Breast epithelium (tissue), 4 donors: ENCODE measurements at regions of chr2 and their contacts with region 1.

Region 1: GRCh38 chr2:43226558-43226954 is at the start of gene ZFP36L2:
- DNase-seq: peak; percentile 95
- H3K4me3 ChIP-seq: peak within 1 kb of the TSS; percentile 69 to 96 (median 91)
- H3K27ac ChIP-seq: peak within 1 kb of the TSS; percentile 99
- H3K4me1 ChIP-seq: peaks cover 0 to 16% of the 10 kb centered on the region in 2 donors
- H3K27me3 ChIP-seq: no peaks in the 10 kb centered on the region
- CTCF ChIP-seq: peak; percentile 8 to 36 (median 22)
- POLR2A ChIP-seq: peak; percentile 94
- total RNA-seq, gene ZFP36L2: 111 to 155 (median 124) TPM

Region 2: GRCh38 chr2:42835577-42836371 is 390.8 kb before region 1 on chr2:
- intact Hi-C with region 1: loop called (anchors 10 kb)
- DNase-seq: peak in 1 of 2 donors; percentile 76
- H3K4me3 ChIP-seq: no peak overlapping the region
- H3K27ac ChIP-seq: peak overlapping the region; percentile 68 to 77
- H3K4me1 ChIP-seq: no peaks in the 10 kb centered on the region
- H3K27me3 ChIP-seq: no peaks in the 10 kb centered on the region
- CTCF ChIP-seq: no peak
- POLR2A ChIP-seq: peak; percentile 28

Region 3: GRCh38 chr2:42957109-42957860 is 269.3 kb before region 1 on chr2:
- intact Hi-C with region 1: no loop called
- DNase-seq: no peak
- H3K4me3 ChIP-seq: no peak overlapping the region
- H3K27ac ChIP-seq: peak overlapping the region; percentile 91 to 92
- H3K4me1 ChIP-seq: peaks cover 14 to 19% of the 10 kb centered on the region in 2 donors
- H3K27me3 ChIP-seq: no peaks in the 10 kb centered on the region
- CTCF ChIP-seq: no peak
- POLR2A ChIP-seq: no peak

Region 4: DNA sequence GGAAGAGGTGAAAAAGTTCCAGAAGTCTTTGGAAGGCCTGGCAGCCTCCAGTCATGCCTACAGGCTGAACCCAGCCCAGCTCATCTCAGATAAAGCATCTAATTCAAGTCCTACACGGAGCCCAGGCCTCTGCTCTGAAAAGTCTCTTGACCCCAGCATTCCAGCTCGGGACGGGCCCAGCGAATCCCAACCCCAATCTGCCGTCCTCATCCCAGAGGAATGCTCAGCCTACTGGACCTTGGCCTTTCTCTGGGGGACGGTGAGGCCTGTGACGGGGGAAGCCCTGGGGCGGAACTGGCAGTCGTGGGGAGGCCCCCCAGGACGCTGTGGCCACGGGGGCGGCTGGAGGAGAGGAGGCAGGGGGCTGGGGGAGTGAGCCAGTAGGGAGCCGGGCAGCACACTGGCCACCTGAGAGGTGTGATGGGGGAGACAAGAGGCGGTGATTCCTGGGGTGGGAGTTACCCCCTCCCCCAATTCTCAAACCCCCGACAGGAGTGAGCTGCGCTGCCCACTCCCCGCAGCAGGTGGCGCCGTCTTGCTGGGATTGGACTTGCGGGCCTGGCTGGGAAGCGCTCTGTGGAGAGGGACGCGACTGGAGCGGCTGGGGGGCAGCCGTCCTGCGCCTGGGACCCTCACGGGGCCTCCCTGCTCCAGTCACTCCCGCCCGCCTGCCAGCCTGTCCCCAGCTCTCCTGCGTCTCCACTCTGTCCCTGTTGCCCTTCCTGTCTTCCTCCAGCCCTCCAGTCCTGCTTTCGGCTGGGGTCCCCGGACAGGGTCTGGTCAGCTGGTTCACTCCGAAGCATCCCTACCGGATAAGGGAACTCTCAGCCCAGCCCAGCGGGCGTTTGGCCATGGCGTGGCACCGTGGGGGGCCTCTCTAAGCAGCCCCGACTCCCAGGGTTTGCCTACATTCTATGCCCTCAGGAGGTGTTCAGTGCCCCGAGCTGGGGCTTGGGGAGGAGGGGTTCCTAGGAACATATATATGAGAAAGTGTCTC is 251.5 kb before region 1 on chr2:
- intact Hi-C with region 1: loop called (anchors 5 kb)
- DNase-seq: peak; percentile 64 to 79
- H3K4me3 ChIP-seq: peak overlapping the region; percentile 33 to 64 (median 40)
- H3K27ac ChIP-seq: peak overlapping the region; percentile 71 to 83
- H3K4me1 ChIP-seq: peaks cover 0 to 5% of the 10 kb centered on the region in 2 donors
- H3K27me3 ChIP-seq: no peaks in the 10 kb centered on the region
- CTCF ChIP-seq: peak; percentile 88 to 96 (median 92)
- POLR2A ChIP-seq: no peak

Region 5: GRCh38 chr2:43024515-43025011 is 202.0 kb before region 1 on chr2:
- intact Hi-C with region 1: loop called (anchors 10 kb)
- DNase-seq: no peak
- H3K4me3 ChIP-seq: no peak overlapping the region
- H3K27ac ChIP-seq: no peak overlapping the region
- H3K4me1 ChIP-seq: no peaks in the 10 kb centered on the region
- H3K27me3 ChIP-seq: no peaks in the 10 kb centered on the region
- CTCF ChIP-seq: peak in 2 of 3 donors; percentile 54 to 83
- POLR2A ChIP-seq: no peak

Region 6: DNA sequence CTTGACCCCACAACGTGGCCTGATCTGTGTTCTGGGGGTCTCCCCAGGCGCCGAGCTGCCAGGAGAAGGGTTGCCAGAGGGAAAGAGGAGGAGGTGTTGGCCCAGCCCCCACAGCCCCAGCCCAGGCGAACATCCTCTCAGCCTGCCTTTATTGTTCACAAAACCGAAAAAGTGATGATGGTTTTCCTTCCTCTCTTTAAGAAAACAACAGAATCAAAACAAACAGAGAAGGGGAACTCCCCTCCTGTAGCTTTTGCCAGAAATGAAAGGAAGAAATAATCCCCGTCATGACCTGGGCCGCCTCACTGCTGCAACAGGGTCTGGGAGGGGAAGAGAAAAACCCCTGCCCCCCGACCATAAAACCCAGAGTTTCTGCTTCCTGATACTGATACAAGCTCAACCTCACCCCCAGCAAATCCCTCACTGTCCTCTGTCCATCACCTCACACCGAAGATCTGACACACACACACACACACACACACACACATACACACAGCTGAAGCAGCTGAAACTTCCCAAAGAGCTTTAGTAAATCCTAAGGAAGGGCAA is 52.1 kb before region 1 on chr2:
- intact Hi-C with region 1: loop called (anchors 2 kb)
- DNase-seq: no peak
- H3K4me3 ChIP-seq: no peak overlapping the region
- H3K27ac ChIP-seq: peak overlapping the region; percentile 35 to 73
- H3K4me1 ChIP-seq: peaks cover 4% of the 10 kb centered on the region in 2 donors
- H3K27me3 ChIP-seq: no peaks in the 10 kb centered on the region
- CTCF ChIP-seq: no peak
- POLR2A ChIP-seq: no peak

Region 7: DNA sequence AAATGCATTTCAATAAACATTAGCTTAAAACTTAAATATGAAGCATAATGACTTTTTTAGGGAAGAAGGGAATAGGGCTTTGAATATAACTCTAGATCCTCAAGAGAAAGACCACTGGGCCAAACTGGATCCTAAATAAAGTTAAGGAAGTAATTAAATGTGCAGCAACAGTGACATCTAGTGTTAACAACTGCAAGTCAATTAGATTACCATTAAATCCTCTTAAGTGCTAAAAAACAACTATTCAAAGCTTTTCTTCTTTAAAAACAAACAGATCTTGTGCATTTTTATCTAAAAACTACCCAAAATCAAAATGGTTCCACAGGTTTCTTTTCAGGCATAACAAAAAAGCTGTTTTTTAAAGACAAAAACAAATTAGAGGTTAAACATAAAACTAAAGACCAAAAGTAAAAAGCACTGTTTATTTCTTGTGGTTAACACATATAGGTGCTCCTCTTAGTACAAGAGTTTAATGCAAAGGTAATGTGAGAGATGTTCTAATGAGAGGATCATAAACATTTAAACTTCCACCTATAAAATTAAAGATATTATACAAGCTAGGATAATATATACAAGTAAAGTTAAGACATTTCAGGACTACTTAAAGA is 257.9 kb after region 1 on chr2:
- intact Hi-C with region 1: loop called (anchors 10 kb)
- DNase-seq: no peak
- H3K4me3 ChIP-seq: no peak overlapping the region
- H3K27ac ChIP-seq: no peak overlapping the region
- H3K4me1 ChIP-seq: peaks cover 0 to 10% of the 10 kb centered on the region in 2 donors
- H3K27me3 ChIP-seq: no peaks in the 10 kb centered on the region
- CTCF ChIP-seq: peak in 2 of 3 donors; percentile 83 to 84
- POLR2A ChIP-seq: no peak